GM10248 (cell line): ENCODE measurements at regions of chr15 and their contacts with region 1.

Region 1: DNA sequence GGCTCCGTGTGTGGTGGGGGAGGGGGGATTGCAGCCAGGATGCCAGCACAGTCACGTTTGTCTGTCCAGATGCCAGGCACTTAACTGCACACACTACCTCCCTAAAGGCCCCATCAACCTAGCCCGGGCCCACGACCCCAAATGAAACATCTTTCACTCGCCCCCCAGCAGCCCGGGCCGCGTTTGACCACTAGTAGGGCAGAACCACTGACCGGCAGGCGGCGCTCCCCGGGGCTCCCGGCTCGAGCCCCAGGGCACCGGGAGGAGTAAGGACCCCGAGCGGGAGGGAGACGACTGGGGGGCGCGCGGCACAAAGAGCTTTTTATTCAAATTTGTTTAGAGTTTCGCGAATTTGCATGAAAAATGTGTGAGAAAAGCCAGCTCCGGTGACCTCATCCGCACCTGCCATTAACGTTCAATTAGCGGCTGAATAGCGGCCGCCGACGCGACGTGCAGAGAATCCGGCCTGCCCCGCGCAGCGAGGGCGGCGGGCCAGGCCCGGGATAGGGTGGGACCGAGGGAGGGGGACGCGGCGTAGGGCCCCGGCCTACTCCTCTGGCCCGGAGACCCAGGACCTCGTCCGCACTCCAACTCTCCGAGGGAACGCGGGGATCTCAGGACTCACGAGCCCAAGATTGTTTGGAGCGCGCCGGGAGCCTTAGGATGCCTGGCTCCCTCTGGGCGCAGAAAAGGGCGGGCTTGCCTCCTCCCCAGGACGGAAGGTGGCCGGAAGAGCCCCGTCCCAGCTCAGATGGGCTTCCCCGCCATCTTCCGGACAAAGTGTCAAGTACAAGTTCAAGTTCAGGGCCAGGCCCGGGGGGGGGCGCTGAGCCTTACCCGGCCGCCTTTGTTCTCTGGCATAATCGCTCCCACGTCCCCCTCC is 64.9 kb upstream of the POLG start:
- DNase-seq: peak; percentile 86
- CTCF ChIP-seq: peak; percentile 63

Region 2: GRCh38 chr15:89057504-89058133 is 341.9 kb before region 1 on chr15:
- CTCF ChIA-PET with region 1: no interaction called
- POLR2A ChIA-PET with region 1: no interaction called
- DNase-seq: peak; percentile 83
- CTCF ChIP-seq: peak; percentile 98

Region 3: DNA sequence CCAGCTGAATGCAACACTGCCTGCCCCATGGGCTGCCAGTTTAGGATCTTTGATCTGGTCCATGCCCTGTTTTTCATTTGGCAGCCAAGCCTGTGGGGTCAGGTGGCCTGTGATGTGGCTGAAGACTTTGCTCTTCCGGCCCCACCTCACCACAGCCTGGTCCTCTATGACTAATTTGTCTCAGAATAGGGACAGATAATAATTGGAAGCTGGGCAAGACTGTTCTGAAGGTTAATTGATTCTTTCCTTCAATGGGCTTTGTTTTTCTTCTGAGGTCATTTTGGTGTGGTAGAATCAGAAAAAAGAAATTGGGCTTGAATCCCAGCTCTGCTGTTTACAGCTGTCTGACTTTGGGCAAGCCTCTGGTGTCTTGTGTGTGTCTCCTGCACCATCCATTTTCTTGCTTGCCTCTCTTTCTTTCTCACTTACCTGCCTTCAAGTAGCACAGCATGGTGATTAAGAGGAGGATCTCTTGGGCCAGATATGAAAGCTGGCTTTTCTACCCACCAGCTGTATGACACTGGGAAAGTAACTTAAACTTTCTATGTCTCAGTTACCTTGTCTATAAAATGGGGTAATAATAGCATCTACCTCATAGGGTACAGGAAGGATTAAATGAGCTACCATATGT is 287.0 kb before region 1 on chr15:
- CTCF ChIA-PET with region 1: no interaction called
- POLR2A ChIA-PET with region 1: no interaction called
- DNase-seq: peak; percentile 60
- CTCF ChIP-seq: no peak

Region 4: DNA sequence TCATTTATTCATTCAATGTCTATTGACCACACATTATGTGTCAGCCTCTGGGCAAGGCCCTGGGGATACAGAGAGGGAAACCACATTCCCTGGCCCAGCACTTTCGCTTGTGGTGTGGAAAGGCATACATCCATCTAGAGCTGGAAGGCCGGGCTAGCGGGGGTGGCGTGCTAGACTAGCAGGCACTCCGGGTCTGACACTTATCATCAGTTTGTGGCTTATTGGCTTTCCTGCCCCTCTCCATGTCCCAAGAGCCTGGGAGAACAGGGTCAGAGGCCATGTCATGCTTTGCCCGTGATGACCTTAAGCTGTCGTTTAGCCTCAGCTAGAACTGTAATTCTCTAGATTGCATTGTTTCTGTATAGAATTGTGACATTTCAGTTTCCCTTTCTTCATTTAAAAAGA is 13.6 kb before region 1 on chr15:
- CTCF ChIA-PET with region 1: interaction called, 14 read pairs
- POLR2A ChIA-PET with region 1: no interaction called
- DNase-seq: no peak
- CTCF ChIP-seq: no peak

Region 5: DNA sequence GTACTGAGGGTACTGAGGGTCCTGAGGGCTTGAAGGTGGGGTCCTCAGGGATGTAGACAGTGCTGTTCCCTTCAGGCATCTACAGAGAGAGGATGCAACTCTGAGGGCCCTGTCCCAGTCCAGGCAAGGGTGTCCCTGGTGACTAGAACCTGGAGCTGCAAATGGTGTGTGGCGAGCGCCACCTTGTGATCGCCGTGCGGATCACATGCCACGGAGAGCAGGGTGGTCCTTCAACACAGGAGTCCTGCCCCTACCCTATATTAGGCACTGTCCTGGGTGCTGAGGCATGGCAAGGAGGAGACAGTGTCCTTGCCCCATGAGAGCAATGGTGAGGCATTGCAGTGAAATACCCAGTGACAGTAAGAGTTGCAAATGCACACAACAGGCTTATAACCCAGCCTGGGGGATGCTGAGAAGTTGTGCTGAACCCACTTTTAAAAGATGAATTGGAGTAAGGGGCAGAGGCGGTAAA is 73.3 kb after region 1 on chr15:
- CTCF ChIA-PET with region 1: interaction called, 12 read pairs
- POLR2A ChIA-PET with region 1: no interaction called
- DNase-seq: peak; percentile 79
- CTCF ChIP-seq: peak; percentile 90

Region 6: GRCh38 chr15:89526601-89527441 is 127.3 kb after region 1 on chr15:
- CTCF ChIA-PET with region 1: no interaction called
- POLR2A ChIA-PET with region 1: no interaction called
- DNase-seq: no peak
- CTCF ChIP-seq: no peak